Heart left ventricle (tissue), 16 donors: ENCODE measurements at regions of chr9 and their contacts with region 1.

Region 1: DNA sequence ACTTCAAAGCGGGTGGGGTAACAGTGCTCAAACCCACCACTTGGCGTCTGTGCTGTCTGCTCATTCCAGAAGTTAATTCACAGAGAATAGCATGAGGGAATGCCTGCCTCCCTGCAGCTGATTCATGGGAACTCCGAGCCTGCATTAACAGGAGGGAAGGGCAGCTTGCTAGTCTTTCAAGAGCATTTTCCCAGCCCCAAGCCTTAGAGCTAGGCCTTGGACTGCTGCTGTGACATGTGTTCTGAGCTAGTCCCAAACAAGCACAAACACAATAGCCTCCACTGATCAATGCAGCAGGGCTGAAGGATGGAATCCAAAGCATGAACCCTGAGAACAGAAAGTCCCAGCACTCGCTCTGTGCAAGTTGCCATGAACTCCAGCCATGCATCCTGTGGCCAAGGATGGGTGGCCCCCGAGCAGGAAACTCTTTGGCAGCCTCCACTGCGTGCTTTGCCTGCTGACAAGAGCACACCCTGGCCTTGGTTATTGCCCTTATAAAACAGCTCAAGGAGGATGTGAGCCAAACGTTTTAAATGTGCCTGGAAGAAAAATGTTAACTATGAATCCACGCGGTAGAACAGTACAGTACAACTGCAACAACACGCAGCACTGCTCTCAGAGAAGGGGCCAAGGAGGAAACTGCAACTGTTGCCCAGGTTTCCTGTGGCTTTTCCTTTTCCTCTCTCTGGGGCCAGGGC is 653.1 kb upstream of the KLF4 start:
- DNase-seq: peak; percentile 76 to 85 (median 80)
- ATAC-seq: peak; percentile 98 to 99 (median 98)
- H3K4me3 ChIP-seq: no peak overlapping the region
- H3K27ac ChIP-seq: peak overlapping the region; percentile 53 to 91 (median 80)
- H3K4me1 ChIP-seq: peaks cover 0 to 25% (median 16%) of the 10 kb centered on the region in 12 donors
- H3K27me3 ChIP-seq: no peaks in the 10 kb centered on the region
- CTCF ChIP-seq: no peak
- POLR2A ChIP-seq: peak in 1 of 2 donors; percentile 5

Region 2: GRCh38 chr9:107760454-107761237 is 382.0 kb before region 1 on chr9:
- intact Hi-C with region 1: loop called in 1 of 10 experiments (anchors 10 kb)
- DNase-seq: peak; percentile 53 to 77 (median 66)
- ATAC-seq: peak; percentile 88 to 93 (median 90)
- H3K4me3 ChIP-seq: no peak overlapping the region
- H3K27ac ChIP-seq: peak overlapping the region in 10 of 12 donors; percentile 7 to 85 (median 42)
- H3K4me1 ChIP-seq: peaks cover 0 to 46% (median 6%) of the 10 kb centered on the region in 12 donors
- H3K27me3 ChIP-seq: no peaks in the 10 kb centered on the region
- CTCF ChIP-seq: no peak
- POLR2A ChIP-seq: no peak

Region 3: GRCh38 chr9:107768224-107768623 is 374.4 kb before region 1 on chr9:
- intact Hi-C with region 1: loop called in 2 of 10 experiments (anchors 2 to 10 kb)
- DNase-seq: peak in 4 of 5 donors; percentile 54 to 71 (median 65)
- ATAC-seq: peak; percentile 91 to 98 (median 93)
- H3K4me3 ChIP-seq: no peak overlapping the region
- H3K27ac ChIP-seq: peak overlapping the region; percentile 5 to 79 (median 63)
- H3K4me1 ChIP-seq: peaks cover 0 to 18% (median 9%) of the 10 kb centered on the region in 12 donors
- H3K27me3 ChIP-seq: no peaks in the 10 kb centered on the region
- CTCF ChIP-seq: no peak
- POLR2A ChIP-seq: no peak

Region 4: GRCh38 chr9:108196332-108197007 is 53.8 kb after region 1 on chr9:
- intact Hi-C with region 1: no loop called
- DNase-seq: no peak
- ATAC-seq: no peak
- H3K4me3 ChIP-seq: no peak overlapping the region
- H3K27ac ChIP-seq: no peak overlapping the region
- H3K4me1 ChIP-seq: no peaks in the 10 kb centered on the region
- H3K27me3 ChIP-seq: peaks cover 0 to 8% (median 0%) of the 10 kb centered on the region in 9 donors
- CTCF ChIP-seq: no peak
- POLR2A ChIP-seq: no peak